ENCODE measurements at regions of chr19 and their contacts with region 1.

Region 1: DNA sequence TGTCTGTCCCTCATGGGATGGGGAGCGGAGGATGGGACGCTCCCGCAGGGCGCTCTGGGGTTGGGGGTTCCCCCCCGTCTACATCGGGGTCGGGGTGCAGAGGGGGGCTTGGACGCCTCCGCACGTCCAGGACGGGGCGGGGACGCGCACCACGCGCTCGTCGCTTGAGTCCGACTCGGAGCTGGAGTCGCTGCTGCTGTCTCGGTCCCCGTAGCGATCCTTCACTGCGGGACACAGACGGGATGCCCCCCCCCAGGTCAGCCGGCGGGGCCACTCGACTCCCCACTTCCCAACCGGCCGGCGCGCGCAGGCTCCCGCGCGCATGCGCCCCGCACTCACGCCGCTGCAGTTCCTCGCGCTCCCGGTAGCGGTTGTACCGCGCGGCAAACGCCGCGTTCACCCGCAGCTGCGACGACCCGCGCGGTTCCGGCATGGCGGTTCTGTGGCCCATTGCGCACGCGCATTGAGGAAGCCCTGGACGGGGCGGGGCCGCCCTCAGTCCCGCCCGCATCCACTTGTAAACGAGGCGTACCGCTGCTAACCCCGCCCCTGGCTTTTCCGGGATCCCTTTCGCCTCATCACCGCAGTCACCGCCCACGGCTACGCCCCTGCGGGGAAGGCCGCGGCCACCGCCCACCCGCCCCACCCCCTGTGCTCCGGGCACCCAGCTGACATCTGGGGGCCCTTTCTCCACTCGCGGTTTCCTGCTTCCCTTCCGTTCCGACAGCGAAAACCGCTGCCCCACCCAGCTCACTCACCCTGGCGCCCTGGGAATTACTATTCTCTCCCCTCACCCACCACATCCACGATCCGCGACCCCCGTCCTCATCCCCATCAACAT is at the start of gene KRI1:
- DNase-seq: peak; percentile 99
- H3K4me3 ChIP-seq: peak within 1 kb of the TSS; percentile 90
- H3K27ac ChIP-seq: peak within 1 kb of the TSS; percentile 93
- H3K4me1 ChIP-seq: peaks cover 32% of the 10 kb centered on the region
- H3K27me3 ChIP-seq: no peaks in the 10 kb centered on the region
- CTCF ChIP-seq: no peak
- total RNA-seq, gene KRI1: 45.2 and 47.8 TPM in 2 replicates

Region 2: GRCh38 chr19:10251792-10252694 is 313.7 kb before region 1 on chr19 and contains the start of gene MRPL4:
- CTCF ChIA-PET with region 1: no interaction called
- POLR2A ChIA-PET with region 1: no interaction called
- intact Hi-C with region 1: no loop called
- DNase-seq: peak; percentile 99
- H3K4me3 ChIP-seq: peak within 1 kb of the TSS; percentile 79
- H3K27ac ChIP-seq: peak within 1 kb of the TSS; percentile 81
- H3K4me1 ChIP-seq: peaks cover 5% of the 10 kb centered on the region
- H3K27me3 ChIP-seq: no peaks in the 10 kb centered on the region
- CTCF ChIP-seq: no peak
- total RNA-seq, gene MRPL4: 107 and 112 TPM in 2 replicates

Region 3: DNA sequence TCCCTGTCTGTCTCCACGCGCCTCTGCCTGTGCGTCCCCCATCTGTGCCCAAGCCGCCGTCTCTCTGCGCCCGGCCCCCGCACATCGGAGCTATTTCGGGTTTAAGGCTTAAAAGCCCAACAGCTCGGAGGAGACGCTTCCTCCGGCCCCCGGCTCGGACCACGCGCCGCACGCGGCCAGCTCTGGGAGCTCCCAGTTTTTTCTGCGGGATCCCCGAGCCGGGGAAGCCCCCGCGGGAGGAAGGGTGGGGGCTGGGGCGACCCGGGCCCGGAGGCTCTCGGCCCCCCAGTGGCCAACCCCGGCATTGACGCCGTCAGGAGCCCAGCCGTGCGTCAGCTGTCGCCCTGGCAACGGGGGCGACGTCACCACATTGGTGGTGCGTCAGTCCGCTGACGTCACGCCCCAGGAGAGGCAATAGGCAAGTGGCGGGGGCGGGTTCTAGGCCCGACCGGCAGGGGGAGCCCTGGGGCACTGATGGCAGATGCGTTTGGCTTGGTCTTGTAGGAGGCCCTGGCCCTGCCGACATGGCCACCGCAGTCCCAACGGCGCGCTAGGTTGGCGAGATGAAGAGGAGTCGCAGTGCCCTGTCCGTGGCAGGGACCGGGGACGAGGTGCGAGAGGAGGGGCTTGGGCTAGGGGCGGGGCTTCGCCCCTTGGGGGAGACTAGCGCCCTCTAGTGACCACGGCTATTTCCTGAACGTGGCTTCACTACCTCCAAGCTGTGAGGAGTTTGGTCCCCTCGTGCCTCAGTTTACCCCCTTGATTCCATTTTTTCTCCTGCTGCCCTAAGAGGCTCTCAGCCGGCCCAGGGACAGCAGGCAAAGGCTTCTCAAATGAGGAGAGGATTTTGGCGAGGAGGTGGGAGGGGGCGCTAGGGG is 149.2 kb before region 1 on chr19:
- CTCF ChIA-PET with region 1: interaction called, 4 read pairs
- POLR2A ChIA-PET with region 1: no interaction called
- intact Hi-C with region 1: loop called (anchors 5 kb)
- DNase-seq: peak; percentile 92
- H3K4me3 ChIP-seq: peak overlapping the region; percentile 54
- H3K27ac ChIP-seq: peak overlapping the region; percentile 77
- H3K4me1 ChIP-seq: peaks cover 27% of the 10 kb centered on the region
- H3K27me3 ChIP-seq: no peaks in the 10 kb centered on the region
- CTCF ChIP-seq: peak; percentile 86

Region 4: GRCh38 chr19:10478903-10479384 is 86.8 kb before region 1 on chr19:
- CTCF ChIA-PET with region 1: no interaction called
- POLR2A ChIA-PET with region 1: no interaction called
- intact Hi-C with region 1: loop called (anchors 5 kb)
- DNase-seq: peak; percentile 96
- H3K4me3 ChIP-seq: no peak overlapping the region
- H3K27ac ChIP-seq: no peak overlapping the region
- H3K4me1 ChIP-seq: peaks cover 11% of the 10 kb centered on the region
- H3K27me3 ChIP-seq: no peaks in the 10 kb centered on the region
- CTCF ChIP-seq: peak; percentile 67

Region 5: DNA sequence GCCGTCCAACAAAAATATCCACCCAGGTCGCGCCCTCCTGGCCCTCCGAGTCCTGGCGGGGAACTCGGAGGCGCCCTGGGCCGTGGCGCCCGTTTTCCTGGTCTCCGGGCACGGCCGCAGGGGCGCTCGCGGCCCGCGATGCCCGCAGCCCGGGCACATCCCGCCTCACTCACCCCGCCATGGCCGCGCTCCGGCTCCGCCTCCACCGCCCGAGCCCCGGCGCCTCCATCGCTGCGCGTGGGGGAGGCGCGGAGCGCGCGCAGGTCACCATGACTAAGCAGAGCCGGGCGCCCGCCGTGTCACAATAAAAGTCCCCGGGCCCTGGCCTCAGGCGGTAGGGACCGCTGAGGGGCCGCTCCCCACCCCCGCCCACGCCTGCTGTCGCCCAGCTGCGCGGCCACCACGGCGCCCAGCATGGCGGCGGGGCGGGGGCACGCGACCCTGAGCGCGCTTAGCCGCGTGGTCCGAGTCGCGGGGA is 63.2 kb before region 1 on chr19:
- CTCF ChIA-PET with region 1: no interaction called
- POLR2A ChIA-PET with region 1: no interaction called
- intact Hi-C with region 1: loop called (anchors 5 kb)
- DNase-seq: peak; percentile 95
- H3K4me3 ChIP-seq: peak overlapping the region; percentile 90
- H3K27ac ChIP-seq: peak overlapping the region; percentile 99
- H3K4me1 ChIP-seq: no peaks in the 10 kb centered on the region
- H3K27me3 ChIP-seq: no peaks in the 10 kb centered on the region
- CTCF ChIP-seq: no peak

Region 6: DNA sequence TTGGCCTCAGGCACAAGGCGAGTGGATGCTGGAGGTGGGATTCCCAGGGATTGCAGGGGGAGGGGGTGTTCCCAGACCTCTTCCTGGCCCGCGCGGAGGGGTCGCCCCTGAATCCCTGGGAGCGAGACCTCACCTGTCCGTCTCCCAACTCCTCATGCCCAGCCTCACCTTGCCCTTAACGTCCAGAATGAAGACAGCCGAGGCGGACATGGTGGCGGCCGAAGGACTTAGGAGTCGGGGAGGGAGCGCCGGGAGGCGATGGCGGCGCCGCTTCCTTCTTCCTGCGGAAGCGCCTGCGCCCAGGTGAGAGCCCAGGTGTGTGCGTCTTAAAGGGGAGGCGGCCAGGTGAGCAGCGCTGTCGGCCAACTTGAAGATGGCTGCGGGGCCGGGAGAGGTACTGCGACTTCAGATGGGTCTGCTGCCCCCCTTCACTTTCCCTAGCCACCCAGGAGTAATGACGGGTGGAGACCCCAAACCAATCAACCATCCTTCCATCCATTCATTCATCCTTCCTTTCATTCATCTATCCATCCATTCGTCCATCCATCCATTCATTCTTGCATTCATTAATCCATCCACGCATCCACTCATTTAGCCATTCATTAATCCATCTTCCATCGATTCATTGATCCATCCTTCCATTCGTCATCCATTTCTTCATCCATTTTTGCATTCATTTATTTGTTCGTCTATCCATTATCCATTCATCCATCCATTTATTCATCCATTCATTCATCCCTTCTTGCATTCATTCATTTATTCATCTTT is 21.4 kb after region 1 on chr19 and contains the start of gene AP1M2:
- CTCF ChIA-PET with region 1: no interaction called
- POLR2A ChIA-PET with region 1: no interaction called
- intact Hi-C with region 1: no loop called
- DNase-seq: no peak
- H3K4me3 ChIP-seq: no peak within 1 kb of the TSS
- H3K27ac ChIP-seq: no peak within 1 kb of the TSS
- H3K4me1 ChIP-seq: no peaks in the 10 kb centered on the region
- H3K27me3 ChIP-seq: peaks cover 8% of the 10 kb centered on the region
- CTCF ChIP-seq: no peak
- total RNA-seq, gene AP1M2: 2.5 and 2.8 TPM in 2 replicates

Region 7: GRCh38 chr19:10653715-10654492 is 88.1 kb after region 1 on chr19 and contains the start of gene ILF3:
- CTCF ChIA-PET with region 1: no interaction called
- POLR2A ChIA-PET with region 1: no interaction called
- intact Hi-C with region 1: loop called (anchors 5 kb)
- DNase-seq: peak; percentile 100
- H3K4me3 ChIP-seq: peak within 1 kb of the TSS; percentile 100
- H3K27ac ChIP-seq: peak within 1 kb of the TSS; percentile 100
- H3K4me1 ChIP-seq: peaks cover 22% of the 10 kb centered on the region
- H3K27me3 ChIP-seq: no peaks in the 10 kb centered on the region
- CTCF ChIP-seq: no peak
- total RNA-seq, gene ILF3: 665 and 683 TPM in 2 replicates

Region 8: GRCh38 chr19:10695401-10696398 is 129.9 kb after region 1 on chr19:
- CTCF ChIA-PET with region 1: interaction called, 3 read pairs
- POLR2A ChIA-PET with region 1: no interaction called
- intact Hi-C with region 1: loop called (anchors 5 kb)
- DNase-seq: peak; percentile 99
- H3K4me3 ChIP-seq: peak overlapping the region; percentile 31
- H3K27ac ChIP-seq: peak overlapping the region; percentile 62
- H3K4me1 ChIP-seq: peaks cover 10% of the 10 kb centered on the region
- H3K27me3 ChIP-seq: no peaks in the 10 kb centered on the region
- CTCF ChIP-seq: no peak

Region 9: DNA sequence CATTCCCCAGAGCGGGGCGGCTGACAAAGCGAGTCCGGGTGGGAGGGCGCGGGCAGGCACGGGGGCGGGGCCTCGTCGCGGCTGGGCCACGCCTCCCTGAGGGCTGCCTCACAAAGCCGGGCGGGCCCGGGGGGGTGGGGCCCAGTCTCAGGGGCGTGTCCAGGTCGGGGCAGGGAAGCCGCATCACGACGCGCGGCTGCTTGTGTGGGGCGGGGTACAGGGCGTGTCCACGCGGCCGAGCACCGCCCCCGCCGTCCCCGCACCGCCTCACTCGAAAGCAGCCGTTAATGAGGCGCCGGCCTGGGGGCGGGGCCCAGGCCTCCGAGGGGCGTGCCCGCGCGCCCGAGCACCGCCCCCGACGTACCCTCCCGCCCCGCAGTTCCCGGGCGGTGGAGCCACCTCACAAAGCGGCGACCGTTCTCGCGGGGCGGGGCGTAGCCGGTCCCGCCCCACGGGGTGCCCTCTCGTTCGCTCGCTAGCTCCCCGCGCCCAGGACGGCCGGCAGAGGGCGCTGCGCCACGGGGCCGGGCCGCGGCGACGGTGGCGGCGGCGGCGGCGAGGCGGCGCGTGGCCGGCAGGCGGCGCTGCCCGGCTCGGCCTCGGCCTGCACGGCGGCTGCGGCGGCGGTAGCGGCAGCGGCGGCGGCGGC is 305.3 kb after region 1 on chr19 and contains the start of gene CARM1:
- CTCF ChIA-PET with region 1: interaction called, 11 read pairs
- POLR2A ChIA-PET with region 1: no interaction called
- intact Hi-C with region 1: no loop called
- DNase-seq: peak; percentile 98
- H3K4me3 ChIP-seq: peak within 1 kb of the TSS; percentile 98
- H3K27ac ChIP-seq: peak within 1 kb of the TSS; percentile 98
- H3K4me1 ChIP-seq: peaks cover 11% of the 10 kb centered on the region
- H3K27me3 ChIP-seq: no peaks in the 10 kb centered on the region
- CTCF ChIP-seq: peak; percentile 48
- total RNA-seq, gene CARM1: 78.7 and 81.5 TPM in 2 replicates

Measured in A673 (cell line).